IMR-90 (cell line): ENCODE measurements at regions of chr2 and their contacts with region 1.

Region 1: DNA sequence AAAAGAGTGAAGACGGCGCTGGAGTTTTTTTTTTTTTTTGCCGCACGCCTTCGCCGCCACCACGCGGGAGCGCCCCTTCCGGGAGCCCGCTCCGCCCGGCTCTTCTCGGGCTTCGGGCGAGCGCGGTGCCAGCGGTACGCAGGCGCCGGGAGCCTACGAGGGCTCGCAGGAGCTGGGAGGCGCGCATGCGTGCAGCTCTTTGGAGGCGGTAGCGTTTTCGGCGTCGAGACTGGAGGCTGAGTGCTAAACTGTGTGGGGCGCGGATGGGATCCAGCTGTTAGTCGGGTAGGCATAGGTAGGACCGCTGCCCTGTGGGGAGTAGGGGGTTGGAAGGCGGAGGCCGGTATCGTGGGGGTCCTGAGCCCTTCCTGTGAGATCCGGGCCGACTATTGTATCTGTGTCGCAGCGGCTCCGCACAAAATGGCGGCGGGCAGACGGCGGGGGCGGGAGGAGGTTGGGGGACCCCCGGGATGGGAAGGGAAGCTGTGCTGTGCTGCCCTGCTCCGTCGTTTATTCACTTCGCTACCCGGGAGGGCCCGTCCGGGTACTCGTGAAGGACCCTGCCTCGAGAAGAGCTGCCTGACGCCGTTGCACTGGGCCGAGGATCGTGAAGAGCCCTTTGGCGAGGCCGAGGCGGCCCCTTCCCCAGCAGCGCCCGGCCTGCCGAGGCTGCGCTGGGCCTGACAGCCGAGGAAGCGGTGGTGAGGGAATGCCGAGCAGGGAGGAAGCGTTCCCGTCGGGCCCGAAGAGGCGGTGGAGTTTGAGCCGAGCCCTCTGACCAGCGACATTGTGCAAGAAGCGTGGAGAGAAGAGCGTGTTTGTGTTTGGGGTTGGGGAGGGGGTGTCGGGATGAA is at the start of gene ZNF638:
- DNase-seq: peak; percentile 89
- ATAC-seq: peak; percentile 98
- H3K4me3 ChIP-seq: peak within 1 kb of the TSS; percentile 94
- H3K27ac ChIP-seq: peak within 1 kb of the TSS; percentile 99
- H3K4me1 ChIP-seq: no peaks in the 10 kb centered on the region
- H3K27me3 ChIP-seq: peaks cover 7% of the 10 kb centered on the region
- CTCF ChIP-seq: peak; percentile 82
- POLR2A ChIP-seq: peak; percentile 87
- RAD21 ChIP-seq: no peak
- total RNA-seq, gene ZNF638: 129 and 142 TPM in 2 replicates

Region 2: DNA sequence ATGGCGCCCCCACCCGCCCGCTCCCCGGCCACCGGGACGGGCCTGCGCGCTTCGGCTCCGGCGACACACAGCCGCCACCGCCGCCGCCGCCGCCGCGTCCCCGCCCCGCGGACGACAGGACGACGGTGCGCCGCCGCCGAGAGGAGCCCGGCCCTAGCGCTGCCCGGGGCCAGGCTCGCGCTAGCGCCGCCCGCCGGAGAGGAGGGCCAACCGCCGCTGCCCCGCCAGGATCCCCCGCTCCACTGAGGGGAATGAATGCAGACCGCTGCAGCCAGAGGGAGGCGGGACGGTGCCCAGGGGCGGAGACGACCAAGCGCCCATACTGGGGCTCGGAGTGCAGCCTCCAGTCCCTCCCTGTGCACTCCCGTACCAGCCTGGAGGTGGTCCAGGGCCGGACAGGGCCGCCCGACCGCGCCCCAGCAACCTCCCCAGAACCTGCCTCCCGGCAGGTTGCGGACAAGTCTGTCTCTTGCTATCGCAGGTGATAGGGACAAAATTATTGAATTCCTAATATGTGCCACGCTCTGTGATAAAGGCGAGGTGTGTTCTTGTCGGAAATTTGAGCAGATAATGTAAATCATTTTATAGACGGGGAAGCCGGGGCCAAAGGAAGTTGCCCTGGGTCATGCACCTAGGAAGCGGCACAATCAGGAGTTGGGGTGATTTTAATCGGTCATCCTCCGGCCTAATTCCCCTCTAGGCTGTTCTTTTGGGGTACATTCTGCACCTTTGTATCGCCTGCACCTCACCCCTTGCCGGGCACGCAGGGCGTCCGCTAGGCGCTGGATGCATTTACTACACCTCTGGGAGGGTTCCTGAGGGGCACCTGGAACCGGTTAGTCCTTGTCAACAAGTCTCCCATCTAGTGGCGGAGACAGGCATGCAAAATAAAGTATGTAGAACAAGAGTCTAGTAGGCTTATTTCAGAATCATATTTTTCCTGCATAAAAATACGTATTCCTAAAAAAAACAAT is 336.8 kb before region 1 on chr2 and contains the start of gene TEX261:
- CTCF ChIA-PET with region 1: no interaction called
- POLR2A ChIA-PET with region 1: no interaction called
- dilution Hi-C with region 1: no loop called
- in situ Hi-C with region 1: no loop called
- intact Hi-C with region 1: no loop called
- DNase-seq: peak; percentile 71
- ATAC-seq: peak; percentile 99
- H3K4me3 ChIP-seq: peak within 1 kb of the TSS; percentile 74
- H3K27ac ChIP-seq: peak within 1 kb of the TSS; percentile 49
- H3K4me1 ChIP-seq: peaks cover 11% of the 10 kb centered on the region
- H3K27me3 ChIP-seq: no peaks in the 10 kb centered on the region
- CTCF ChIP-seq: peak; percentile 91
- POLR2A ChIP-seq: no peak
- RAD21 ChIP-seq: peak; percentile 18; the same call in 1 of the 2 replicates
- total RNA-seq, gene TEX261: 26.3 and 31.1 TPM in 2 replicates

Region 3: GRCh38 chr2:71130113-71130904 is 201.5 kb before region 1 on chr2 and contains the starts of genes MCEE and MPHOSPH10:
- CTCF ChIA-PET with region 1: no interaction called
- POLR2A ChIA-PET with region 1: no interaction called
- dilution Hi-C with region 1: no loop called
- in situ Hi-C with region 1: no loop called
- intact Hi-C with region 1: loop called (anchors 10 kb)
- DNase-seq: peak; percentile 90
- ATAC-seq: peak; percentile 96
- H3K4me3 ChIP-seq: peak within 1 kb of the TSS; percentile 78
- H3K27ac ChIP-seq: peak within 1 kb of the TSS; percentile 84
- H3K4me1 ChIP-seq: peaks cover 3% of the 10 kb centered on the region; the same call in 1 of the 2 replicates
- H3K27me3 ChIP-seq: no peaks in the 10 kb centered on the region
- CTCF ChIP-seq: no peak
- POLR2A ChIP-seq: peak; percentile 70
- RAD21 ChIP-seq: no peak
- total RNA-seq, gene MCEE: 11.1 and 13.9 TPM in 2 replicates
- total RNA-seq, gene MPHOSPH10: 5.4 and 15.6 TPM in 2 replicates

Region 4: DNA sequence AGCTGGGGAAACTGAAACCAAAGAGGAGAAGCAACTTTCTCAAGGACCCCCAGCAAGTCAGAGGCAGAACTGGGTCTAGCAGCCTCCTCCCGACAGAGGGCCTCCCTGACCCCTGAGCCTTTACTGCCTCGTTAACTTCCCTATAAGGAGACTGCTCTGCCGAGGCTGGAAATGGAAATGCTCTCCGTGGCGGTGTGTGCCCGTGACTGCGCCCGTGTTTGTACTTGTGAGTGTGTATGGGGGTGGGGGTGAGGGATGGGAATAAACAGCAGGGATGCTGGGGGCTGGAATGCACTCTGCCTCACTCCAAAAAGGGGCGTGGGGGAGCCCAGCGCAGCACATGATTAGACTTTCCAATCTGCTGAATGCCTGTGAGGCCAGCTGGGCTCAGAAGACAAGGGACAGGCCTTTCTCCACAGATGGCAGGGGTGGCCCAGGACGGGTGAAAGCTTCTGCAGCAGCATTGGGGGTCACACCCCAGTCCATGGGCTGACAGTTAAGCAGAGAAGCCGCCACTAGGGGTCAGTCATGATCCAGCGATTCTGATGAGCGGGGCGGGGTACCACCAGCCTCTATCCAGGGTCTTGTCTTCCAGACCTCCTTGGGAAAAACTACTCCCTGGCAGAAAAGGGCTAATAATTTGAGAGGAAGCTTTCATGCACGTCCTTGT is 174.5 kb before region 1 on chr2:
- CTCF ChIA-PET with region 1: no interaction called
- POLR2A ChIA-PET with region 1: no interaction called
- dilution Hi-C with region 1: no loop called
- in situ Hi-C with region 1: no loop called
- intact Hi-C with region 1: no loop called
- DNase-seq: peak; percentile 18
- ATAC-seq: peak; percentile 89
- H3K4me3 ChIP-seq: peak overlapping the region; percentile 26
- H3K27ac ChIP-seq: no peak overlapping the region
- H3K4me1 ChIP-seq: peaks cover 2% of the 10 kb centered on the region; the same call in 1 of the 2 replicates
- H3K27me3 ChIP-seq: peaks cover 8% of the 10 kb centered on the region; the same call in 1 of the 2 replicates
- CTCF ChIP-seq: peak; percentile 47
- POLR2A ChIP-seq: no peak
- RAD21 ChIP-seq: peak; percentile 57

Region 5: DNA sequence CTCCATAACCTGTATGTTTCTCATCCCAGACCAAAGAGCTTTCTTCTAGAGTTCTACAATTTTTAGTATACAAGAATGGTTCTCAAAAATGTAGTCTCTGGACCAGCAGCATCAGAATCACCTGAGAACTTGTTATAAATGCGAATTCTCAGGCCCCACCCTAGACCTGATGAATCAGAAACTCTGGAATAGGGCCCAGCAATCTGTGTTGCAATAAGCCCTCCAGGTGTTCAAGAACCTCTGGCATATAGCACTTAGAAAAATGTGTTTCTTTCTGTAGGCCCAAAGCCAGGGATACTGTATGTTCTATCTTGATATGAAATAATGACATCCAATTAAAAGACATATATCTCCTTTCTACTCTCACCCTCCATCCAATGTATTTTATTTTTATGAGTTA is 115.3 kb before region 1 on chr2:
- CTCF ChIA-PET with region 1: no interaction called
- POLR2A ChIA-PET with region 1: no interaction called
- dilution Hi-C with region 1: no loop called
- in situ Hi-C with region 1: no loop called
- intact Hi-C with region 1: no loop called
- DNase-seq: no peak
- ATAC-seq: no peak
- H3K4me3 ChIP-seq: no peak overlapping the region
- H3K27ac ChIP-seq: no peak overlapping the region
- H3K4me1 ChIP-seq: no peaks in the 10 kb centered on the region
- H3K27me3 ChIP-seq: no peaks in the 10 kb centered on the region
- CTCF ChIP-seq: no peak
- POLR2A ChIP-seq: no peak
- RAD21 ChIP-seq: no peak

Region 6: DNA sequence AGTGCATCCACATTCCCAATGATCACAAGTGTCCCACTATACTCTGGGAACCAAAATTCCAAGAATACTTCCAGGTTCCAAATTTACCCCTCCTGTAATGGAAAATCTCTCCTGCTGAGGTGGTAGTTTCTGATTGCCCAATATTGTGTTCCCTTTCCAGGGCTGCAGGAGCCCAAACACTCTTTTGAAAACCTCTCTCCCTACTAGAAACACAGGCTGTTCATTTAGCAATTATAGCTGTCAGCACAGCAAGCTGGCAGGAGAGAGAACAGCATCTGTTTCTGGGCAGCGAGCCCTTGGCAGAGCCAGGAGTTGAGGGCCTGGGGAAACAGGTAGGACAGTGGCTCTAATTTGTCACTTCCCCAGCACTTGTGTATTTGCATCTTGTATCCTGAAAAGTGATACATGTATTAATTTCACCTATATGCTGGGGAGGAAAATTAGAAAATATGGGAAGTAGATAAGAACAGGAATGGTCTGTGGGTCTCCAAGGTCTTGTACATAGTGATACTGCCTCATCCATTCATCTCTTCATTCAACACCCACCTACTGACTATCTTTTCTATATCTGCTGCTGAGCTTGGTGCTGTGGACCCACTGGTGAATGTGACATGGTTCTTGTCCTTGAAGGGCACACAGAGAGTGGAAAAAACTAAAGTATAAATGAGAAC is 88.0 kb before region 1 on chr2:
- CTCF ChIA-PET with region 1: no interaction called
- POLR2A ChIA-PET with region 1: no interaction called
- dilution Hi-C with region 1: no loop called
- in situ Hi-C with region 1: no loop called
- intact Hi-C with region 1: no loop called
- DNase-seq: no peak
- ATAC-seq: no peak
- H3K4me3 ChIP-seq: no peak overlapping the region
- H3K27ac ChIP-seq: no peak overlapping the region
- H3K4me1 ChIP-seq: no peaks in the 10 kb centered on the region
- H3K27me3 ChIP-seq: no peaks in the 10 kb centered on the region; the same call in 1 of the 2 replicates
- CTCF ChIP-seq: no peak
- POLR2A ChIP-seq: no peak
- RAD21 ChIP-seq: no peak

Region 7: DNA sequence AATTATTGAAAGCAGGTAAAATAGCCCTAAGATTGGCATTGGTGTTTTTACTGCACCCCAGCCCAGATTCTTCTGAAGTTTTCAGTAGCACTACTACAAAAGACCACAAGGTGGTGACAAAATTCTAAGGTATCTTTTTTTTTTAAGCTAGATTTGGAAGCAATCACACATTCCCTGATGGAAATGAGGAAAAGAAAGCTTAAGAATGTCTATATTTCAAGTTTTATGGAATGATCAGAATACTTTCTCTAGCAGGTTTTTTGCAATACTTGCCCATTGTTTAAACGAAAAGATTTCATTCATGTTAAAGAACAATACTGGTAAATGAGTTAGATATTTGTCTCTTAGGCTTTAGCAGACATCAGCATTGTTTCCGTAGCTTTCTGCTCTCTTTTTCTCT is 32.3 kb before region 1 on chr2:
- CTCF ChIA-PET with region 1: interaction called, 24 read pairs
- POLR2A ChIA-PET with region 1: no interaction called
- dilution Hi-C with region 1: no loop called
- in situ Hi-C with region 1: no loop called
- intact Hi-C with region 1: no loop called
- DNase-seq: peak; percentile 36
- ATAC-seq: peak; percentile 42; the same call in 1 of the 2 replicates
- H3K4me3 ChIP-seq: no peak overlapping the region
- H3K27ac ChIP-seq: no peak overlapping the region
- H3K4me1 ChIP-seq: no peaks in the 10 kb centered on the region
- H3K27me3 ChIP-seq: peaks cover 1% of the 10 kb centered on the region
- CTCF ChIP-seq: peak; percentile 68
- POLR2A ChIP-seq: no peak
- RAD21 ChIP-seq: peak; percentile 70

Region 8: DNA sequence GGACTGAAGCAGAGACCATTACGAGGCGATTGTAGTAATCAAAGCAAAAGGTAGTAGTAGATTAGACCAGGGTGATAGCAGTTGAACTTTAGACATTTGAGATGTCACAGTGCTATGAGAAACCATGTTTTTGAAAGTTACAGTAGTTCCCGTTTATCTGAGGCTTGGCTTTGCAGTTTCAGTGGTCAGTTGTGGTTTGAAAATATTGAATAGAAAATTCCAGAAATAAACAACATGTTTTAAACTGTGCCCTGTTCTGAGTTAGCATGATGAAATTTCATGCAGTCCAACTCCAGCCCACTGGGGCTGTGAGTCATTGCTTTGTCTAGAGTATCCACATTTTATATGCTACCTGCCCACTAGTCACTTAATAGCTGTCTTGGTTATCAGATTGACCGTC is 47.3 kb after region 1 on chr2:
- CTCF ChIA-PET with region 1: interaction called, 11 read pairs
- POLR2A ChIA-PET with region 1: no interaction called
- dilution Hi-C with region 1: no loop called
- in situ Hi-C with region 1: no loop called
- intact Hi-C with region 1: no loop called
- DNase-seq: peak; percentile 81
- ATAC-seq: peak; percentile 87
- H3K4me3 ChIP-seq: no peak overlapping the region
- H3K27ac ChIP-seq: no peak overlapping the region
- H3K4me1 ChIP-seq: peaks cover 7% of the 10 kb centered on the region
- H3K27me3 ChIP-seq: no peaks in the 10 kb centered on the region
- CTCF ChIP-seq: no peak
- POLR2A ChIP-seq: no peak
- RAD21 ChIP-seq: no peak

Region 9: GRCh38 chr2:72027426-72028161 is 695.8 kb after region 1 on chr2:
- CTCF ChIA-PET with region 1: no interaction called
- POLR2A ChIA-PET with region 1: interaction called, 15 read pairs
- dilution Hi-C with region 1: no loop called
- in situ Hi-C with region 1: no loop called
- intact Hi-C with region 1: no loop called
- DNase-seq: no peak
- ATAC-seq: no peak
- H3K4me3 ChIP-seq: no peak overlapping the region
- H3K27ac ChIP-seq: no peak overlapping the region
- H3K4me1 ChIP-seq: no peaks in the 10 kb centered on the region
- H3K27me3 ChIP-seq: peaks cover 1% of the 10 kb centered on the region; the same call in 1 of the 2 replicates
- CTCF ChIP-seq: no peak
- POLR2A ChIP-seq: no peak
- RAD21 ChIP-seq: no peak